Common myeloid progenitor, CD34-positive (primary cell): ENCODE measurements at regions of chr6 and their contacts with region 1.

Region 1: GRCh38 chr6:146876271-146877151 is 277.7 kb downstream of the ADGB start:
- DNase-seq: peak; percentile 94 to 97 (median 94)
- H3K4me3 ChIP-seq: peak overlapping the region in 3 of 7 experiments; percentile 27 to 45 (median 33)
- H3K27ac ChIP-seq: peak overlapping the region; percentile 79 to 86
- H3K4me1 ChIP-seq: peaks cover 35 to 65% (median 57%) of the 10 kb centered on the region in 4 experiments
- H3K27me3 ChIP-seq: no peaks in the 10 kb centered on the region

Region 2: GRCh38 chr6:146865756-146866379 is 10.6 kb before region 1 on chr6:
- CTCF ChIA-PET with region 1: interaction called, 15 read pairs
- POLR2A ChIA-PET with region 1: no interaction called
- DNase-seq: no peak
- H3K4me3 ChIP-seq: no peak overlapping the region
- H3K27ac ChIP-seq: no peak overlapping the region
- H3K4me1 ChIP-seq: peaks cover 2 to 20% (median 12%) of the 10 kb centered on the region in 4 experiments
- H3K27me3 ChIP-seq: no peaks in the 10 kb centered on the region

Region 3: DNA sequence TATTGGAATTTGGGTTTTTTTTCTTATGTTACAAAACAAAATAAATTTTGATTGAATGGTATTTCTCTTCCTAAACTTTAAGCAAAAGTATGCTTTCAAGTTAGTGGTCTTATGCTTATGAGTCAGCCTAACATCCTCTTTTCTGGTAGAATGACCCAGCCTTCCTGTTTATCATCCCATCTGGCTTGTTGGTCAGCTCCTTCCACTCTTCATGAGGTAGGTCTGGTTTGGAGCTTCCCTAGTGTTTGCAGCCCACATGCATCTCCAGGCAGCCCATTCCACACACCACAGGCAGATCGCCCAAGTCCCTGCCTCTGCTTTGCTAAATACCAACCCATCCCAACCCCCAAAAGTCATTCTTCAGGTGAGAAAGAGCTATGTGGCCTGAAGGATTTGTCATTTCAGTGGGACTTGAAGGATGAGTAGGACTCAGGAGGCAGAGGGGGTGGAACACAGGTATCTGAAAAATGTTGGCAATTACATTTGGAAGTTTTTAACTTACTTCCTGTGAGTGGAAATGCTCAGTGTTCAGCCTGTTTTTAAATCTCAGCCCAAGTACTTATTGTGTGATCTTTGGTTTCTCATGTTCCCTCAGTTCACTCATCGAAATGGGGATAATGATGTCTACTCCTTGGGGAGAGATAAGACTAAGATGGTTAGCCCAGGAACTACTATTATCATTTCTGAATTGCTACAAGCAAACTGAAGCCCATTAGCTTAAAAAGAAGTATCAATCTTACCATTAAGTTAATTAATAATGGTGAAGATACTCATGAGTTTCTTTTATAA is 16.3 kb after region 1 on chr6:
- CTCF ChIA-PET with region 1: interaction called, 10 read pairs
- POLR2A ChIA-PET with region 1: interaction called, 3 read pairs
- DNase-seq: peak; percentile 76 to 97 (median 95)
- H3K4me3 ChIP-seq: peak overlapping the region in 3 of 7 experiments; percentile 12 to 41 (median 21)
- H3K27ac ChIP-seq: peak overlapping the region; percentile 22 to 78
- H3K4me1 ChIP-seq: peaks cover 6 to 57% (median 27%) of the 10 kb centered on the region in 4 experiments
- H3K27me3 ChIP-seq: no peaks in the 10 kb centered on the region